Dorsolateral prefrontal cortex (tissue), 120 donors: ENCODE measurements at regions of chr17 and their contacts with region 1.

Region 1: DNA sequence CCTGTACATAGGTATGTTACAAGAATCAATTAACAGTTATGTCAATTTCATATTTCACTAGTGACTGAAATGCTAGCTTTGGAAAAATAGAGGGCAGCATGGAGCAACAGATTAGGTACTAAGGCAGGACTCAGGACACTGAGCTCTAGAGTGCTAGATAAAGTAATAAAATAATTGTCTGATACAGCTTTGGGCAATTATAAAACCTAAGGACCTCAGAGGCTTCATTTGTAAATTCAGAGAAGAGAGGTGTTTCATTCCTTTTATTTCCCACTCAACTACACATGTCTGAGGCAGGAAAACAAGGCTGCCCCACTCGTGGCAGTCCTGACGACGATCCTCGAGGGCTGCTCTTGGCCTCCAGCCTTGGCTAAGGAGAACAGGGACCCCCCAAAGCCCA is 81.5 kb downstream of the CA4 start:
- DNase-seq: no peak
- H3K4me3 ChIP-seq: peak overlapping the region in 16 of 59 donors; percentile 0 to 50 (median 12)
- H3K27ac ChIP-seq: peak overlapping the region; percentile 7 to 95 (median 87)
- H3K27me3 ChIP-seq: no peaks in the 10 kb centered on the region
- CTCF ChIP-seq: peak; percentile 42 to 84 (median 64)

Region 2: DNA sequence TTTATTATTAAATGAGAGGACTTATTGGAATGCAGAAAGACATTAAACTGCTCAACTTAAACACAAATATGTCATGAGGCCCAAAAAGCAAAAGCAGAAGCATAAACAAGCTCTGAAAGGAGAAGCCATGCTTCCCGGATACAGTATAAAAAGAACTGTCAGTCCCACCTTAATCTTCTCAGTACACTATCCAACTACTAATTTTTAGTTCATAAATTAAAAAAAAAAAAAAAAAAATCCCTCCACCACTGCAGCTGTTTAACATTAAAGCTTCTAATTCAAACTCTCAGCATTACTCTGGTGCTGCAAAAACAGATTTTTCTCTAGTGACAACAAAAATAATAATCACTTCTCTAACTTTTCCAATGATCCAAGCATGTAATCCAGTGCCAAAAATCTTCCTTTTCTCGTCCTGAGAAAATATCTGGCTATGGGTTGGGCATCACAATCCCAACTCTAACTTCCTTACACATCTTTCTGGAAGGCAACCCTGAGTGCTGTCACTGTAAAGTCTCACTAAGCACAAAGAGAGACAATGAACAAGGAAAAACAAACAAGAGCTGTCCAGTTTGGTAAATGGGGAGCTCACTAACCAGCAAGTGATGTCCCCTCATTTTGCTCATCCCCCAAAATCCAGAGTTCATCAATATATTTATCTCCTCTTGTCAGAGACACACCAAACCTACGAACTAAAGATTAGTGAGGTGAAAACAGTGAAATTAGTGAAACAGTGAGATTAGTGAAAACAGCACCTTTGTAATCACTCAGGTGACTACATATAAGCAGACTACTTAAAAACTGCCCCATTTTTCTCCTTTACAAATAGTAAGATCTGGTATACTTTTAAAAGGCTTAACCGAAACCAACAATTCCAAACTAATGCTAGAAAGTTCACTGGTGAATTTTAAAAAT is 155.2 kb after region 1 on chr17:
- intact Hi-C with region 1: loop called (anchors 5 to 10 kb)
- DNase-seq: no peak
- H3K4me3 ChIP-seq: peak overlapping the region in 6 of 59 donors; percentile 0 to 25 (median 14)
- H3K27ac ChIP-seq: peak overlapping the region; percentile 4 to 92 (median 66)
- H3K27me3 ChIP-seq: no peaks in the 10 kb centered on the region
- CTCF ChIP-seq: no peak

Region 3: GRCh38 chr17:60392042-60392844 is 161.0 kb after region 1 on chr17 and contains the start of gene USP32:
- intact Hi-C with region 1: loop called (anchors 5 to 10 kb)
- DNase-seq: peak; percentile 93 to 97 (median 96)
- H3K4me3 ChIP-seq: peak within 1 kb of the TSS; percentile 65 to 98 (median 90)
- H3K27ac ChIP-seq: peak within 1 kb of the TSS; percentile 79 to 99 (median 96)
- H3K27me3 ChIP-seq: no peaks in the 10 kb centered on the region
- CTCF ChIP-seq: peak in 39 of 56 donors; percentile 1 to 49 (median 27)
- total RNA-seq, gene USP32: 74.4 to 158 (median 108) TPM

Region 4: GRCh38 chr17:60421273-60421934 is 190.2 kb after region 1 on chr17:
- intact Hi-C with region 1: loop called (anchors 5 to 10 kb)
- DNase-seq: peak in 9 of 10 donors; percentile 45 to 72 (median 56)
- H3K4me3 ChIP-seq: peak overlapping the region; percentile 35 to 78 (median 59)
- H3K27ac ChIP-seq: peak overlapping the region in 49 of 59 donors; percentile 7 to 88 (median 62)
- H3K27me3 ChIP-seq: peaks cover 0 to 5% (median 0%) of the 10 kb centered on the region in 45 donors
- CTCF ChIP-seq: peak; percentile 50 to 99 (median 91)

Region 5: GRCh38 chr17:60435244-60436167 is 204.3 kb after region 1 on chr17:
- intact Hi-C with region 1: loop called in 1 of 2 experiments (anchors 5 kb)
- DNase-seq: peak in 8 of 10 donors; percentile 45 to 84 (median 67)
- H3K4me3 ChIP-seq: peak overlapping the region in 33 of 59 donors; percentile 1 to 50 (median 30)
- H3K27ac ChIP-seq: peak overlapping the region in 47 of 59 donors; percentile 11 to 84 (median 68)
- H3K27me3 ChIP-seq: no peaks in the 10 kb centered on the region
- CTCF ChIP-seq: peak; percentile 73 to 99 (median 96)

Region 6: GRCh38 chr17:60514053-60514452 is 282.8 kb after region 1 on chr17:
- intact Hi-C with region 1: no loop called
- DNase-seq: no peak
- H3K4me3 ChIP-seq: no peak overlapping the region
- H3K27ac ChIP-seq: no peak overlapping the region
- H3K27me3 ChIP-seq: no peaks in the 10 kb centered on the region
- CTCF ChIP-seq: no peak